ENCODE measurements at regions of chr11 and their contacts with region 1.

Region 1: DNA sequence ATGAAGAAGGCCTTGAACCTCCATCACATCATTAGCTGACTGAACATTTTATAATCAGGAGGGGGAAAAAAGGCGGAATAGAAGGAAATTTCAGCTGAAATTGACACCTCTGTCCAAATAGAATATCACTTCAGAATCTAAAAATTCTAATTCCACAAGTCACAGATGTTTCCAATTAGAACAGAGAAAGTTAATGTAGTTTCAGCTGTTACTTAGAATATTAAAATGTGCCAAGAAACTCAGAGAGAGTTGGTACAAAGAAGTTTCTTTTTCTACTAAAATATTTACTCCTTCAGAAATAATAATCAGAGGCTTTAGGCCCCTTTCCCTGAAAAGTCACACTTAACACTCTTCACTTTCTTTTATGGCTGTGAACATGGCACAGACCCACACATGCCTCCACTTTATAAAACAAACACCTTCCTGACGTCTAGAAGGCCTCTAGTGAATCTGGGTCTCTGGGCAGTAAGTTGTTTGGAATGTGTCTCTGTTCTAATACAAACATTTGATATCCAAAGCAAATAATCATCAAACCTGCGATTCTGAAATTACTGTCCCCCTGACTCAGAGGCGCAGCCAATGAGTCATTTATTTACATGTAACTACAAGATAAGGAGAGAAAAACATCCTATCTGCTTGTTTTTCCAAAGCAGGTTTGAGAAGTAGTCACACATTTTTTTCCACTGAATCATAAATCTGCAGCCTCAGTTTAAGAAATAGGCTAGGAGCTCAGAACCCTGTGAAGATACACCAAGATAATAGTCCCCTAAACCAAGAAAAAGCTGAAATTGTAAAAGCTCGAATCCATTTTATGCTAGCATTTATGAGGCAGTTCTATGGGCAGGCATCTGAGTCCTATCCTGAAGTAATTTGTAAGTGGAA is 148.4 kb downstream of the ME3 start:
- DNase-seq: peak; percentile 99
- H3K4me3 ChIP-seq: peak overlapping the region in 1 of 3 experiments; percentile 14
- H3K27ac ChIP-seq: peak overlapping the region; percentile 93
- H3K4me1 ChIP-seq: peaks cover 46% of the 10 kb centered on the region
- H3K27me3 ChIP-seq: no peaks in the 10 kb centered on the region
- CTCF ChIP-seq: no peak
- POLR2A ChIP-seq: peak; percentile 54

Region 2: GRCh38 chr11:86551286-86552092 is 27.5 kb after region 1 on chr11:
- CTCF ChIA-PET with region 1: interaction called, 3 read pairs
- POLR2A ChIA-PET with region 1: interaction called, 3 read pairs
- dilution Hi-C with region 1: no loop called
- intact Hi-C with region 1: loop called (anchors 1 kb)
- DNase-seq: peak; percentile 96
- H3K4me3 ChIP-seq: no peak overlapping the region
- H3K27ac ChIP-seq: peak overlapping the region; percentile 71
- H3K4me1 ChIP-seq: peaks cover 44% of the 10 kb centered on the region
- H3K27me3 ChIP-seq: no peaks in the 10 kb centered on the region
- CTCF ChIP-seq: no peak
- POLR2A ChIP-seq: no peak

Region 3: DNA sequence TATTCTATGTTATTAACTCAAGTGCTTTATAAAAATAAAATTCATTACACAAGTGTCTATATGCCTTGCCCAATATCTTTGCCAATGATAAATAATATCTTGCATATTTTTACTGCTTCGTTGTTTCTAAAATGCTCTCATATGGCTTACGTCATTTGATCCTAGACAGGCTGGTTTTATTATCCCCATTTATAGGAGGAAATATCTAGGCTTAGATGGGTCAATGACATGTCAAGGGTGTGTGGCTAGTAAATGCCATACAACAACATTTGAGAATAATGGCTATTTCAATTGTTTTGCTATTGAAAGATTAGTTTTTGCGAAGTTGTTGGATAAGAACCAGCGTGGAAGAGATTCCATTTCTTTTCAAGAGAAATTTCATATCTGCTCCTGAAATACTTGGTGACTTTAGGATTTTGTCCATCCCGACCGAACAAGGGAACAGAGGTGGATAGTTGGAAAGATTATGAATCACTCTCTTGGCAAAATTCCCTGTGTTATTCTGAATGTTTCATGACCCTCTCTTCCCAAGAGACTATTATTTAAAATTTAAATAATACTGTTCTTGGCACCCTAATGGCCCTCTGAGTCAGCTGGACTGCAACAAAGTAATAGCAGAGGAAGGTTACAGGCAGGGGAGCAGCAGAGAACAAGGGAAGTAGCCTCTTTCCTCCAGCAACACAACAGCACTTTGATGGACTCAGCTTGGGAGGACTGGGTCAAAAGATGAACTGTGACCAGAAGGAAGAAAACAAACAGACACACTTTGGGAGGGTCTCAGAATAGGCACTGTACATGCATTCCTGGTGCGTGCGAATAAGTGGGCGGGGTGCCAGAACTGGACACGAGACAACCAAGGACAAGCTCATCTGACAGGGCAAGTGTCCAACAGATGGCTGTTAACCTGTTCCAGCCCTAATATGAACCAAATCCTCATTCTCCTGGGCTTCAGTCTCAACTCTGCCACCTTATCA is 54.0 kb after region 1 on chr11:
- CTCF ChIA-PET with region 1: interaction called, 7 read pairs
- POLR2A ChIA-PET with region 1: interaction called, 3 read pairs
- dilution Hi-C with region 1: no loop called
- intact Hi-C with region 1: loop called (anchors 1 kb)
- DNase-seq: peak; percentile 98
- H3K4me3 ChIP-seq: no peak overlapping the region
- H3K27ac ChIP-seq: peak overlapping the region; percentile 63
- H3K4me1 ChIP-seq: peaks cover 59% of the 10 kb centered on the region
- H3K27me3 ChIP-seq: no peaks in the 10 kb centered on the region
- CTCF ChIP-seq: no peak
- POLR2A ChIP-seq: no peak

Region 4: GRCh38 chr11:86735462-86736302 is 211.7 kb after region 1 on chr11:
- CTCF ChIA-PET with region 1: interaction called, 3 read pairs
- POLR2A ChIA-PET with region 1: no interaction called
- dilution Hi-C with region 1: no loop called
- intact Hi-C with region 1: loop called (anchors 1 kb)
- DNase-seq: peak; percentile 78
- H3K4me3 ChIP-seq: no peak overlapping the region
- H3K27ac ChIP-seq: peak overlapping the region; percentile 93
- H3K4me1 ChIP-seq: peaks cover 55% of the 10 kb centered on the region
- H3K27me3 ChIP-seq: no peaks in the 10 kb centered on the region
- CTCF ChIP-seq: no peak
- POLR2A ChIP-seq: peak; percentile 39

Region 5: DNA sequence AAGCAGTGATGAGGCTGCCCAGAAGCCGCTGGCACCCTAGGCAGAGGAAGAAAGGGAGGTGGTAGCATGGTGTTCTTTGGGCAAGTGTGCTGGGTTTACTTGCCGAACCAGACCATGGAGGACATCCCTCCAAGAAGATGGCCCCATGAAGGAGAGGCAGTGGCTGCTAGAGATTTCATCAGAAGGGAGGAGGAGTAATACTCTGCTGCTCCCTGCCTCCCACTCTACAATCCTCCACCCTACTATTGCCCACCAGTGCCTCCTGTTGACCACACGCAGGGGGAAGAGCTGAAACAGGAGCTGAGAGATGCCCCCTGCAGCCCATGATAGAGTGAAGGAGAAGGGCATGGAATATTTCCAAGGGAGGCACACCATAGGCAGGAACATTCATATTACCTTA is 225.4 kb after region 1 on chr11:
- CTCF ChIA-PET with region 1: no interaction called
- POLR2A ChIA-PET with region 1: no interaction called
- dilution Hi-C with region 1: no loop called
- intact Hi-C with region 1: no loop called
- DNase-seq: no peak
- H3K4me3 ChIP-seq: no peak overlapping the region
- H3K27ac ChIP-seq: no peak overlapping the region
- H3K4me1 ChIP-seq: no peaks in the 10 kb centered on the region
- H3K27me3 ChIP-seq: no peaks in the 10 kb centered on the region
- CTCF ChIP-seq: no peak
- POLR2A ChIP-seq: no peak

Region 6: DNA sequence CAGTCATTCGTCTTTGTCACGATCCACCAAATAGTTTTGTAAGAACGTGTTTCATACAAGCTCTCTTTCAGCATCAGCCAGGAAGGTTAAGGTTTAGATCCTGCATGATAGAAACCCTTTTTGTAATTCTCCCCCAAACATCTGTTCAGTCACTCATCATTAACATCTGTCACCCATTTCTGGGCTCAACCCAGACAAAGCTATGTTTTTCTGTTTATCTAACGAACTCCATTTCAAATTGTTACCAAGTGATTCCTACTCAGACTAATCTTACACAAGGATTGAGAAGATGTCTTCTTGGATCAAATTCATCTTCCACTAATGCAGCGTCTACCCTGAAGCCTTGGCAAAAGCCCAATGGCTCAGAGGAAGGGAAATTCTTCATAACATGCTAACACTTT is 372.5 kb after region 1 on chr11:
- CTCF ChIA-PET with region 1: no interaction called
- POLR2A ChIA-PET with region 1: no interaction called
- dilution Hi-C with region 1: no loop called
- intact Hi-C with region 1: no loop called
- DNase-seq: peak; percentile 71
- H3K4me3 ChIP-seq: no peak overlapping the region
- H3K27ac ChIP-seq: no peak overlapping the region
- H3K4me1 ChIP-seq: peaks cover 7% of the 10 kb centered on the region
- H3K27me3 ChIP-seq: no peaks in the 10 kb centered on the region
- CTCF ChIP-seq: no peak
- POLR2A ChIP-seq: no peak